ENCODE measurements at regions of chr6 and their contacts with region 1.

Region 1: DNA sequence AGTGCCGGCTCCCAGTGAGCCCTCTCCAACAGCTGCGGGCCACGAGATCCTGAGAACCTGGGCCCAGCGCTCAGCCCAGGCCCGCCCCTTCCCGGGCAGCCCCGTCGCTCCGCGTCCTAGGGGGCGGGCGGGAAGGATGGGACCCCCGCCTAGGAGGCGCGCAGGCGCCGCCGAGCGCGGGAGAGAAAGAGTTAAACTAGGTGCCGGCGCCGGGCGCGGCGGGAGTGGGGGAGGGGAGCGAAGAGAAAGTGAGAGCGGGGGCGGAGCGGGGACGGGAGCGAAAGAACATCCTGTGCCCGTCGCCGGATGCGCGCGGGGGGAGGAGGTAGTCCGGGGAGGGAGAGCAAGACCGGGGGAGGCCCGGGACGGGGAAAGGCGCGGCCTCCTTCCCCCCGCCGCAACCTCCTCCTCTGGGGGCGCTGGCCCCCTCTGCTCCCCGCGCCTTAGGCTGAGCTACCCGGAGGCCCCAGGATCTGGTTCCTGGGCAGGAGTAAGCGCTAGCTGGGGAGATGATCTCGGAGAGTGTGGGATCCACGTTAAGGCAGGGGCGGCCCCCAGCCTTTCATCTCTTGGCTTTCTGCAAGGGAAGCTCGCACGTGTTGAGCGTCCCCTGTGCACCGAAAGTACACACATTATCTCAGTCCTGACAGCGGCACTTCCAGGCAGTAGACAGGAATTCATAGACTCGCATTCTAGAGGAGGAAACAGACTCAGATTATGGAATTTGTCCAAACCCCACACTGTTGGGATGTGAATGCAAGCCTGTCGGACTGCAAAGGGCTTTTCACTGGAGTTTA is 4.9 kb upstream of the ARMC12 start:
- DNase-seq: peak; percentile 96 to 99
- ATAC-seq: peak; percentile 86
- H3K4me3 ChIP-seq: peak overlapping the region; percentile 46
- H3K27ac ChIP-seq: peak overlapping the region; percentile 97 to 98
- H3K4me1 ChIP-seq: peaks cover 5 to 6% of the 10 kb centered on the region in 2 donors
- H3K27me3 ChIP-seq: no peaks in the 10 kb centered on the region

Region 2: GRCh38 chr6:35034411-35035191 is 697.3 kb before region 1 on chr6:
- intact Hi-C with region 1: no loop called
- DNase-seq: peak; percentile 79 to 85
- ATAC-seq: peak; percentile 69
- H3K4me3 ChIP-seq: no peak overlapping the region
- H3K27ac ChIP-seq: peak overlapping the region; percentile 71 to 87
- H3K4me1 ChIP-seq: peaks cover 3 to 9% of the 10 kb centered on the region in 2 donors
- H3K27me3 ChIP-seq: no peaks in the 10 kb centered on the region

Region 3: DNA sequence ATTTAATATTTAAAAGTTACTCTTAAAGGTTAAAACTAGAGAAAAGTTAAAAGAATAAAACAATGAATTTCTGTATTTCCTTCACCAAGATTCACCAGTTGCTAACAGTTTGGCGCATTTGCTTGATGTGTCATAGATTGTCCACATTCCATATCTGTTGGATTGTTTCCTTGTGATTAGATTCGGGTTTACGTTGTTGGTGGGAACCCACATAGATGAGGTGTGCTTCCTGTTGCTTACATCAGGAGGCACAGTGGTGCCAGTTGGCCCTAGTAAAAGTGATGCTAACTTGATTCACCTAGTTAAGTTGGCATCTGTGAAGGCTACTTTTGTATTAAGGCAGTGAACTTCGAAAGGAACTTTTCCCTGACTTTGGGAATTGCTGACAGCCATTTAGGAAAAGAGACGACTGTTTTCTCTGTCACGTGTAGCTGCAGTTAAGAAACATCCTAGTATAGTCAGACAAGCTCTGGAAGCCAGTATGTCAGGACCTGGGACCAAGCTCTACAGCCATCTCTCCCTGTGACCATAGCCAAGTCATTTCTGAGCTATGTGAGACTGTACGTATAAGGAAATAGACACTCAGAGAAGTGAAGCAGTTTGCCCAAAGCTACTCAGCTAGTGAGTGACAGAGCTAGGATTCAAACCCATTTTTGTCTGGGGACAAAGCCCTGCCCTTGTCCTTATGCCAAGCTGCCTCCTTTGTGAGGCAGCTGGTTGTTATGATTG is 340.5 kb before region 1 on chr6:
- intact Hi-C with region 1: no loop called
- DNase-seq: peak in 1 of 2 donors; percentile 10
- ATAC-seq: no peak
- H3K4me3 ChIP-seq: no peak overlapping the region
- H3K27ac ChIP-seq: no peak overlapping the region
- H3K4me1 ChIP-seq: no peaks in the 10 kb centered on the region
- H3K27me3 ChIP-seq: no peaks in the 10 kb centered on the region

Region 4: GRCh38 chr6:35522660-35523658 is 209.0 kb before region 1 on chr6:
- intact Hi-C with region 1: loop called (anchors 1 to 2 kb)
- DNase-seq: peak; percentile 77 to 92
- ATAC-seq: peak; percentile 92
- H3K4me3 ChIP-seq: no peak overlapping the region
- H3K27ac ChIP-seq: no peak overlapping the region
- H3K4me1 ChIP-seq: no peaks in the 10 kb centered on the region
- H3K27me3 ChIP-seq: no peaks in the 10 kb centered on the region

Region 5: GRCh38 chr6:35583893-35584688 is 147.8 kb before region 1 on chr6:
- intact Hi-C with region 1: loop called (anchors 1 to 2 kb)
- DNase-seq: peak in 1 of 2 donors; percentile 72
- ATAC-seq: peak; percentile 75
- H3K4me3 ChIP-seq: no peak overlapping the region
- H3K27ac ChIP-seq: peak overlapping the region in 1 of 2 donors; percentile 71
- H3K4me1 ChIP-seq: peaks cover 4 to 9% of the 10 kb centered on the region in 2 donors
- H3K27me3 ChIP-seq: no peaks in the 10 kb centered on the region

Region 6: GRCh38 chr6:35601331-35602132 is 130.4 kb before region 1 on chr6:
- intact Hi-C with region 1: loop called in 1 of 2 experiments (anchors 5 kb)
- DNase-seq: peak in 1 of 2 donors; percentile 56
- ATAC-seq: peak; percentile 90
- H3K4me3 ChIP-seq: no peak overlapping the region
- H3K27ac ChIP-seq: peak overlapping the region; percentile 97 to 99
- H3K4me1 ChIP-seq: peaks cover 3 to 5% of the 10 kb centered on the region in 2 donors
- H3K27me3 ChIP-seq: no peaks in the 10 kb centered on the region

Region 7: DNA sequence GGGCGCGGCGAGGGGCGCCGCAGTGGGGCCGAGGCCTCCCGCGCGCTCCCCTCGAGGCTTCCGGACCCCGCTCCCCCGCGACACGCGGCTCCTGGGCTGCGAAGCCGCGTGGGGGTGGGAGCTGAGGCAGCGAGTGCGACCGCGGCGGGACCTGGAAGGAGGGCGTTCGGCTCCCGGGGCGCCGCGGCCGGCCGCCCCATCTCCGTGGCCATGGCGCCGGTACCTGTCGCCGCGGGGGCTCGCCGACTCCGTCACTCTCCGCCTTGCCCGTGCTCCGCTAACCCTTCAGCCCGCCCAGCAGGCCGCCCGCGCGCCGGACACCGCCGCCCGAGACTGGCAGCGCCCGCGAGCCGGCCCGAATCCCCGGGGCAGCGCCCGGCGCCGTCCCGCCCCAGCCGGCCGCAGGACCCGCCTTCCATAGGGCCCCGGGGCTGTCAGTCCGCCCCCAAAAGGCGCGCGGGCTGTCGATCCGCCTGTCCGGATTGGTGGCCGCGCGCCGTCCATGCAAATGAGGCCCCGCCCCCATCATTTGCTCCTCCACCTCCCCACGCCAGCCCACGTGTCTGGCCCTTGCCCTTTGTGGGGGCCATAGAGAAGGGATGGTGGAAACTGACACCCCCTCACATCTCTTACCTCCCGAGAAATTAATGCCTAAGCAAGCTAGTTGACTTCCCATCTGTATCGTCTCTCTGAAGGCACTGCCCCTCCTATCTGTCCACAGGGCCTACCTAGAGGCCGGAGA is 43.2 kb before region 1 on chr6 and contains the start of gene FKBP5:
- intact Hi-C with region 1: loop called (anchors 2 kb)
- DNase-seq: peak; percentile 96 to 98
- ATAC-seq: peak; percentile 97
- H3K4me3 ChIP-seq: peak within 1 kb of the TSS; percentile 87 to 98
- H3K27ac ChIP-seq: peak within 1 kb of the TSS; percentile 15 to 86
- H3K4me1 ChIP-seq: no peaks in the 10 kb centered on the region
- H3K27me3 ChIP-seq: no peaks in the 10 kb centered on the region
- total RNA-seq, gene FKBP5: 25.1 to 96.1 TPM

Region 8: GRCh38 chr6:35850208-35850607 is 118.3 kb after region 1 on chr6:
- intact Hi-C with region 1: no loop called
- DNase-seq: no peak
- ATAC-seq: no peak
- H3K4me3 ChIP-seq: no peak overlapping the region
- H3K27ac ChIP-seq: no peak overlapping the region
- H3K4me1 ChIP-seq: no peaks in the 10 kb centered on the region
- H3K27me3 ChIP-seq: no peaks in the 10 kb centered on the region